ENCODE measurements at regions of chr3 and their contacts with region 1.

Region 1: GRCh38 chr3:33440323-33441232 is at the start of gene UBP1:
- DNase-seq: peak; percentile 100
- H3K4me3 Mint-ChIP-seq: peak within 1 kb of the TSS; percentile 98
- H3K27ac Mint-ChIP-seq: peak within 1 kb of the TSS; percentile 100
- H3K4me1 Mint-ChIP-seq: peaks cover 36% of the 10 kb centered on the region
- H3K27me3 Mint-ChIP-seq: no peaks in the 10 kb centered on the region
- total RNA-seq, gene UBP1: 72.1 and 74.1 TPM in 2 replicates

Region 2: GRCh38 chr3:31790193-31791089 is 1650.1 kb before region 1 on chr3:
- intact Hi-C with region 1: no loop called
- DNase-seq: no peak
- H3K4me3 Mint-ChIP-seq: no peak overlapping the region
- H3K27ac Mint-ChIP-seq: no peak overlapping the region
- H3K4me1 Mint-ChIP-seq: no peaks in the 10 kb centered on the region
- H3K27me3 Mint-ChIP-seq: no peaks in the 10 kb centered on the region

Region 3: DNA sequence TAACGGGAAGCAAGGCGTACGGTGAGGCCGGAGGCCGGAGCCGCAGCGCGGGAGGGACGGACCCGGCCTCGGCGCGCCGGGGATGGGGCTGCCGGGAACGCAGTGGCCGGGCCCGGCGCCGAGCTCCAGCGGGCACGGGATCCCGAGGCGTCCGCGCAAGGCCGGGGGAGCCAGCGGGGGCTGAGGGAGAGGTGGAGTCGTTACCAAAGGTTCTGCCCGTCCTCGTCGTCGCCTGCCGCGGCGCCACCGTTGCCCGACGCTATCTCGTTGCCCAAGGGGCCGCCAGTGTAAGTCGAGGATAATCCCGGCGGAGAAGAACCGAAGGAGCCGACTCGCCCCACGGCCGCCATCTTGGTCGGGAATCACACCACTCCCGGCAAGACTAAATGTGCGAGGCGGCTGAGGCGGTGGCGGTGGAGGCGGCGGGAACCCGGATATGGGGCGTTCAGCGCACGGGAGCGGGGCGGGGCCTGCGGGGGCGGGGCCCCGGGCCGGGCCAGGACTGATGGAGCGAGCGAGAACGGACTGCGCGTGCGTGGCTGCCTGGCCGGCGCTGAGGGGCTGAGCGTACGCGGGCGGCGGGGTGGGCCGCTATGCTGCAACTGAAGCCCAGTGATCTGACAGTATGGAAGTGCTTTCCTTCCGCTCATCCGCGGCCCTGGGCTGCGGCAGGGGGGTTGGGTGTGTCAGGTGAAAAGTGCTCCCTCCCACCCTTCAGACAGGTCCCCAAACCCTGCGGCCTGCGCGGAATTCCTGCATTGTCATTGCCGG is 870.0 kb before region 1 on chr3 and contains the start of gene DYNC1LI1:
- intact Hi-C with region 1: loop called (anchors 2 kb)
- DNase-seq: peak; percentile 97
- H3K4me3 Mint-ChIP-seq: peak within 1 kb of the TSS; percentile 88
- H3K27ac Mint-ChIP-seq: peak within 1 kb of the TSS; percentile 92
- H3K4me1 Mint-ChIP-seq: peaks cover 20% of the 10 kb centered on the region
- H3K27me3 Mint-ChIP-seq: no peaks in the 10 kb centered on the region
- total RNA-seq, gene DYNC1LI1: 35.4 and 40.1 TPM in 2 replicates

Region 4: GRCh38 chr3:33096093-33096868 is 344.3 kb before region 1 on chr3:
- intact Hi-C with region 1: loop called (anchors 2 kb)
- DNase-seq: peak; percentile 86
- H3K4me3 Mint-ChIP-seq: peak overlapping the region; percentile 99
- H3K27ac Mint-ChIP-seq: peak overlapping the region; percentile 90
- H3K4me1 Mint-ChIP-seq: peaks cover 38% of the 10 kb centered on the region
- H3K27me3 Mint-ChIP-seq: peaks cover 2% of the 10 kb centered on the region

Region 5: GRCh38 chr3:33425453-33425852 is 15.1 kb before region 1 on chr3:
- intact Hi-C with region 1: loop called (anchors 2 kb)
- DNase-seq: no peak
- H3K4me3 Mint-ChIP-seq: no peak overlapping the region
- H3K27ac Mint-ChIP-seq: no peak overlapping the region
- H3K4me1 Mint-ChIP-seq: peaks cover 32% of the 10 kb centered on the region
- H3K27me3 Mint-ChIP-seq: no peaks in the 10 kb centered on the region

Region 6: GRCh38 chr3:33544126-33544525 is 103.5 kb after region 1 on chr3:
- intact Hi-C with region 1: no loop called
- DNase-seq: no peak
- H3K4me3 Mint-ChIP-seq: no peak overlapping the region
- H3K27ac Mint-ChIP-seq: no peak overlapping the region
- H3K4me1 Mint-ChIP-seq: no peaks in the 10 kb centered on the region
- H3K27me3 Mint-ChIP-seq: no peaks in the 10 kb centered on the region

Region 7: GRCh38 chr3:33645060-33645647 is 204.6 kb after region 1 on chr3:
- intact Hi-C with region 1: loop called (anchors 10 kb)
- DNase-seq: peak; percentile 77
- H3K4me3 Mint-ChIP-seq: peak overlapping the region; percentile 68
- H3K27ac Mint-ChIP-seq: no peak overlapping the region
- H3K4me1 Mint-ChIP-seq: peaks cover 6% of the 10 kb centered on the region
- H3K27me3 Mint-ChIP-seq: no peaks in the 10 kb centered on the region

Region 8: DNA sequence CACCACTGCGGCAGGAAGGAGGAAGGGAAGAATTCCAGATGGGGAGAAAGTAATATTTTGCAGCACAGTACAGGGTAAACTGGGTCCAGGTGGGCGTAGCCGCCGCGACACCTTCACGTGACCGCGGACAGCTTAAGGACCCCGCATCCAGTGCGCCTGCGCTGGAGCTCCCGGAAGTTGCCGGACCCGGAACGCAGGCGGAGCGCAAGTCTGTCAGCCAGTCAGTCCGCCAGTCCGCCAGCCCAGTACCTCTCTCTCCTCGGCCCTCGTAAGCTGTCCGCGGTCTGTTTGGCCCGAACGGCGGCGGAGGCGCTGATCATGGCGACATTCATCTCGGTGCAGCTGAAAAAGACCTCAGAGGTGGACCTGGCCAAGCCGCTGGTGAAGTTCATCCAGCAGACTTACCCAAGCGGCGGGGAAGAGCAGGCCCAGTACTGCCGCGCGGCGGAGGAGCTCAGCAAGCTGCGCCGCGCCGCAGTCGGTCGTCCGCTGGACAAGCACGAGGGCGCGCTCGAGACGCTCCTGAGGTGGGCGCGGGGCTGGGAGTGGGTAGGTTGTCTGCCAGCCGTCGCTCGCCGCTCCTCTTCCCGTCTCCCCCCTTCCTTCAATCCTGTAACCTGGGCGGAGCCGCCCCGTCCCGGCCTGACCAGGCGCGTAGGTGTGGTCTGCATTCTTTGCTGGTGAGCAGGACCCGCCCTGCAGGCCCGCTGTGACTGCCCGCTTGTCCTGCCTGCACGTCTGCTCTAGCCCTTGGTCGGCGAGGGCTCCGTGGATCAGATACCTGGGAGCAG is 358.0 kb after region 1 on chr3 and contains the start of gene PDCD6IP:
- intact Hi-C with region 1: loop called (anchors 1 kb)
- DNase-seq: peak; percentile 97
- H3K4me3 Mint-ChIP-seq: peak within 1 kb of the TSS; percentile 96
- H3K27ac Mint-ChIP-seq: peak within 1 kb of the TSS; percentile 91
- H3K4me1 Mint-ChIP-seq: peaks cover 39% of the 10 kb centered on the region
- H3K27me3 Mint-ChIP-seq: peaks cover 4% of the 10 kb centered on the region
- total RNA-seq, gene PDCD6IP: 175 and 189 TPM in 2 replicates

Region 9: GRCh38 chr3:34439796-34440195 is 999.2 kb after region 1 on chr3:
- intact Hi-C with region 1: no loop called
- DNase-seq: no peak
- H3K4me3 Mint-ChIP-seq: no peak overlapping the region
- H3K27ac Mint-ChIP-seq: no peak overlapping the region
- H3K4me1 Mint-ChIP-seq: no peaks in the 10 kb centered on the region
- H3K27me3 Mint-ChIP-seq: no peaks in the 10 kb centered on the region